ENCODE measurements at regions of chr14 and their contacts with region 1.

Region 1: DNA sequence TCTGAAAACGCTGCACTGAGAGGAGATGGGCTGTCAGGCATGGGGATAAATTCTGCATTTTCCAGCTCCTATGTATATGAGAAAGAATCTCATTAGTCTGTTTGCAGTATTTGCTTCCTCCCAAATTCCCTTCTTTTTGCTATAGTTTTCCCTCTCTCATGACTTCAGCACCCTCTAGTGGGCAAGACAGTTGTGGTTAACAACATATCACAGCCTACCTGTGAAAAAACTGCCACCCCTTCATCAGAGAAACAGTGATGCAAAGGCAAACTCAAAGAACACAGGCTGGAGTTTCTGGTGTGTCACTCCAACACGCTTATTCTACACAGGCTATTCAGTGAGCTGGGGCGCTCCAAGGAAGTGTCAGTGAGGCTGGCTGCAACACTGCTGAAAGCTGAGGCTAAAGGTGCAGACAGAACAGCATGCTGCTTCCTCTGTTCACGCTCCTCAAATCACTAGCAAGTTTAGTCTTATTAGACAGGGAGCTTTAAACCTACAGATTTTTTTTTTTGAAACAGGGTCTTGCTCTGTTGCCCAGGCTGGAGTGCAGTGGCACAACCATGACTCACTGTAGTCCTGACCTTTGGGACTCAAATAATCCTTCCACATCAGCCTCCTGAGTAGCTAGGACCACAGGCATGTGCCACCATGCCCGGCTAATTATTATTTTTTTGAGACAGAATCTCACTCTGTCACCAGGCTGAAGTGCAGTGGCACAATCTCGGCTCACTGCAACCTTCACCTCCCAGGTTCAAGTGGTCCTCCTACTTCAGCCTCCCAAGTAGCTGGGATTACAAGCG is 19.3 kb downstream of the ZC2HC1C start:
- DNase-seq: peak in 1 of 2 donors; percentile 49
- H3K4me3 ChIP-seq: no peak overlapping the region
- CTCF ChIP-seq: peak in 1 of 3 donors; percentile 37
- POLR2A ChIP-seq: no peak

Region 2: GRCh38 chr14:74913986-74914573 is 174.7 kb before region 1 on chr14:
- intact Hi-C with region 1: loop called (anchors 10 kb)
- DNase-seq: peak; percentile 79 to 93
- H3K4me3 ChIP-seq: no peak overlapping the region
- CTCF ChIP-seq: peak in 1 of 3 donors; percentile 38
- POLR2A ChIP-seq: no peak

Region 3: DNA sequence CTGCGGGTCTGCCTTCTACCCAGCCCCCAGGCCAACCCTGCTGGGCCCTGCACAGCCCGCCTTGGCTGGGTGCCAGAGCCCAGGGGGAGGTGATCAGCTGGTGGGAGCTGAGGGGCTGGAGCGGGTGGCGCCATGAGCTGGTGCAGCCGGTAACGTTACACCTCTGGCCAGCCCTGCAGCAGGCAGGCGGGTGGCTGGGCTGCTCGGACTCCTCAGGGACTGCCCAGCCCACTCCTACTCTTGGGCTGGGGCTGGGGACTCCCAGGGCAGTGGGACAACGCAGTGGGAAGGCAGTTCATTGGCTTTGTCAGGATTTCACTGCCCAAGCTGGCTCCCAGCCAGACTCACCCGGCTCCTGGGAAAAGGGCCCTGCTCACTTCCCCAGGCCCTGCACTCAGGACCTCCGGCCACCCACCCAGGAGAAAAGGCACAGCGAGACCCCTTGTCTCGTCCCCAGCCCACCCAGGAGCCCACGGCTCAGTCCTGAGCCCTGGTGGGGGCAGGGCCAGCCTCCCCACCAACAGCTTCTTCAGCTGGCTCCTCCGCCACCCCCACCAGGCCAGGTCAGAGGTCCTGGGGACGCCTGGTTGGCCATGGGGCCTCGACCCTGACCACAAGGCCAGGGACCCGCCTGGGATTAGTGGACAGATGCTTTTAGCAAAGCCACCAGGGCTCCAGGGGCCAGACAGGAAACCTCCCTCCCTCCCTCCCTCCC is 134.4 kb before region 1 on chr14:
- intact Hi-C with region 1: loop called (anchors 5 kb)
- DNase-seq: no peak
- H3K4me3 ChIP-seq: no peak overlapping the region
- CTCF ChIP-seq: no peak
- POLR2A ChIP-seq: no peak